PC-9 (cell line): ENCODE measurements at regions of chr6 and their contacts with region 1.

Region 1: DNA sequence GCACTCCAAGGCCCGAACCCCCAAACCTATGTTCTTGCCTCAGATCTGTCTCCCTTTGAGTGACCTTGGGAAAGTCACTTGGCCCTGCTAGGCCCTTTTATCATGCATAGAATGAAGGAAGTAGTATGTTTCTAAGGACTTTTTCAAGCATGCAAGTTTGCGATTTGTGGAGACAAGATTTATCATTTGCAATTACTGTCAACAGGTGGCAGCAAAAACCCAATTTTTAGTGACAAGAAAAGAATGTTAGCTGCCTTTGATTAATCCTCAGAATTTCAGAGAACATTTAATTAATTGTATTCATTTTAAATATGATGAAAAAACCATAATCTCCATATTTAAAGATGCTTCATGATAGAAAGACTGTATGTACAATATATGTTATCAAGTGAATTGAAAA is 28.3 kb upstream of the PREP start:
- DNase-seq: peak; percentile 25 to 58
- H3K4me3 ChIP-seq: no peak overlapping the region
- H3K27ac ChIP-seq: no peak overlapping the region
- H3K4me1 ChIP-seq: peaks cover 52% of the 10 kb centered on the region
- H3K27me3 ChIP-seq: no peaks in the 10 kb centered on the region
- CTCF ChIP-seq: peak; percentile 84

Region 2: DNA sequence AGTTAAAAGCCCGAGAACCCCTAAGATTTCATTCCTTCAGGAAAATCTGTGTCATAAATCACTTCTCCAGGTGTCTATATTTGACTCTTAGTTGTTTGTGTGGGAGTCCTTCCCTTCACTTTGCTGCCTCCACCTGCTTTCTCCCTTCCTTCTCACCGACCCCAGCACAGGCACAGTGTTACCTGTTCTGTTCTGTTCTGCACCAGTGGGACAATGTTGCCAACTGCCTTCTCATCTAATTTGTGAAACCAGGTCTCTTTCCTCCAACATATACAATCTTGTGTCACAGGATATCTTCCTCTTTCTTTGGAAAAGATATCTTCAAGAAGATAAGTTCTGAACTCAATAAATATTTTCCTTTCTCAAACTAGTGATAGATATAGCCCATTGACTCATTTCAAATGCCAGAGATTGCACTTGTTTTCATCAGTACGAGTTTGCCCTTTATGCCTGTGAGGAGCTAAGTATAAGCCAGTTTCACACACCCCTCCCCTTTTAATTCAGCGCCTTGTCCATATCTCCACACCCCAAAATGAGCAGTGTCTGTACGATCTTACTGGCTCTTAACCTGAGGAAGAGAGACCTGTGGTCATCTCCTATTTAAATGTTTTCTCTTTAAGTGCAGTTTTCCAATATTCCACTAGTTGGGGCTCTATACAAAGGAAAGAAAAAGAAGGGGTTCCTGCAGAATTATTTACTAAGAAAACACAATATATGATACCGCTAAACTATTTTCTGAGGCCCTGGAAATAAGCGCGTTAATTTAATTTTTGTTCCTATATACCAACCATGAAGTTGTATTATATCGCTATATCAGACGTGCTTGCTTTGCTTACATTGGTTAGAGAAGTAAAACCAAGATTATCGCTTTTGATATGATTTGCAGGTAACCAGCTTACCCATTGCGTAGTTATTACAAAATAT is 53.3 kb after region 1 on chr6:
- CTCF ChIA-PET with region 1: interaction called, 10 read pairs
- POLR2A ChIA-PET with region 1: no interaction called
- intact Hi-C with region 1: loop called (anchors 5 kb)
- DNase-seq: peak in 1 of 2 experiments; percentile 53
- H3K4me3 ChIP-seq: no peak overlapping the region
- H3K27ac ChIP-seq: no peak overlapping the region
- H3K4me1 ChIP-seq: peaks cover 13% of the 10 kb centered on the region
- H3K27me3 ChIP-seq: no peaks in the 10 kb centered on the region
- CTCF ChIP-seq: peak; percentile 97

Region 3: DNA sequence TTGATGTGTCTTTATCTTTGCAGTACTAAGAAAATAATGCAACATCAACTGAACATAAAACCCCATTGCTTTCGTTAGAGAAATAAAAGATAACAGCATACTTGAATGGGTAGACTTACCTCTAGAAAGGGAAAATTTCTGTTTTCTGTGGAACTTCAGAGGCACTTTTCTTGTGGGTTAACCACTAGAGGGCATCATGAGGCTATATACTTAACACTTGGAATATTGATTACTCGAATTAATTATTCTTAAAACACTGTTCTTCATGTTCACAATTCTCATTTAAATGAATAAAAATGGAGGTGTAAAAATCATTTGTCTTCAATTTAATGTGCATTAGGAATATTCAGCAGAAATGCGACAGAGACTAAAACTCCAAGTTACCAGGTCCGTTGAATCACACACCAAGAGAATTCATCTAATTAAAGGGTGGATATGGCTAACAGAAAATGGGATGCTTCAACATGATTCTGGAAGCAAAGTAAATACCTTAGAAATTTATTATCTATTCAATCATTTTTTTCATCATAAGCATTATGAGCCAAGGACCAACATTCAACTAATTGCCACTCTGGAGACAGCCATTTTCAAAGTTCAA is 302.4 kb after region 1 on chr6:
- CTCF ChIA-PET with region 1: no interaction called
- POLR2A ChIA-PET with region 1: no interaction called
- intact Hi-C with region 1: loop called (anchors 5 kb)
- DNase-seq: no peak
- H3K4me3 ChIP-seq: no peak overlapping the region
- H3K27ac ChIP-seq: no peak overlapping the region
- H3K4me1 ChIP-seq: no peaks in the 10 kb centered on the region
- H3K27me3 ChIP-seq: no peaks in the 10 kb centered on the region
- CTCF ChIP-seq: peak; percentile 92

Region 4: DNA sequence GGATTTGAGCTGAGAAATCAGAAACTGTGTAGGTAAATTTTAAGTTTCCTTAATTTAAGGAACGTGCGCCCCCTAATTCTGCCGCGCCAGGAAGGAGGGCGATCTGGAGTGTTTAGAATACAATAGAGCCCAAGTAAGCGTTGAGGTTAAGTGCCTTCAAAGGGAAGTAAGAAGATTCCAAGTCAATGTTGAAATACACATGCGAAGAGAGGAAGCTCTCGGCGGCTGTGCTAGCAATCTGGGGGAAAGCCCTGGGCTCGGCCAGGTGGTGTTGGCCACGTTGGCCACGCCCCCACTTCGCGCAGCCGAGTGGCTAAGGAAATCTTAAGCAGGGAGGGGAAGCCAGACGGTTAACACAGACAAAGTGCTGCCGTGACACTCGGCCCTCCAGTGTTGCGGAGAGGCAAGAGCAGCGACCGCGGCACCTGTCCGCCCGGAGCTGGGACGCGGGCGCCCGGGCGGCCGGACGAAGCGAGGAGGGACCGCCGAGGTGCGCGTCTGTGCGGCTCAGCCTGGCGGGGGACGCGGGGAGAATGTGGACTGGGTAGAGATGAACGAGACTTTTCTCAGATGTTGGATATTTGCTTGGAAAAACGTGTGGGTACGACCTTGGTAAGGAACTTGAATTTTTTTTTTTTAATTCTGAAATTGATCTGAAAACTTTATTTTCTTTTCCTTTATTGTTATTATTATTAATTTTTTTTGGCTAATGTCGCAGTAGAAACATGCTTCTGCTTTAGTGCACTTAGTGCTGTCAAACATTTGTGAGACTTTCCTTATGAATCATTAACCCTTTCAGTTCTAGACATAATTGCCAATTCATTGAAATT is 655.0 kb after region 1 on chr6 and contains the start of gene PRDM1:
- CTCF ChIA-PET with region 1: interaction called, 7 read pairs
- POLR2A ChIA-PET with region 1: no interaction called
- intact Hi-C with region 1: loop called (anchors 2 kb)
- DNase-seq: peak; percentile 89 to 94
- H3K4me3 ChIP-seq: peak within 1 kb of the TSS; percentile 78
- H3K27ac ChIP-seq: peak within 1 kb of the TSS; percentile 87
- H3K4me1 ChIP-seq: peaks cover 43% of the 10 kb centered on the region
- H3K27me3 ChIP-seq: no peaks in the 10 kb centered on the region
- CTCF ChIP-seq: peak; percentile 47
- total RNA-seq, gene PRDM1: 1.4 and 2.6 TPM in 2 replicates

Region 5: GRCh38 chr6:106223300-106223930 is 792.2 kb after region 1 on chr6:
- CTCF ChIA-PET with region 1: interaction called, 5 read pairs
- POLR2A ChIA-PET with region 1: no interaction called
- intact Hi-C with region 1: loop called (anchors 1 kb)
- DNase-seq: peak; percentile 49 to 63
- H3K4me3 ChIP-seq: no peak overlapping the region
- H3K27ac ChIP-seq: 0 out of 2 replicates have a peak overlapping the region, but pooled peaks have one; percentile 9
- H3K4me1 ChIP-seq: 0 out of 2 replicates have a peak, but pooled peaks cover 3% of the 10 kb centered on the region
- H3K27me3 ChIP-seq: no peaks in the 10 kb centered on the region
- CTCF ChIP-seq: peak; percentile 93

Region 6: GRCh38 chr6:106325336-106326178 is 894.3 kb after region 1 on chr6 and contains the start of gene ATG5:
- CTCF ChIA-PET with region 1: no interaction called
- POLR2A ChIA-PET with region 1: interaction called, 27 read pairs
- intact Hi-C with region 1: no loop called
- DNase-seq: peak; percentile 96 to 98
- H3K4me3 ChIP-seq: peak within 1 kb of the TSS; percentile 91
- H3K27ac ChIP-seq: peak within 1 kb of the TSS; percentile 92
- H3K4me1 ChIP-seq: peaks cover 13% of the 10 kb centered on the region
- H3K27me3 ChIP-seq: no peaks in the 10 kb centered on the region
- CTCF ChIP-seq: no peak
- total RNA-seq, gene ATG5: 38.1 and 39.8 TPM in 2 replicates